Common myeloid progenitor, CD34-positive (primary cell): ENCODE measurements at regions of chr12 and their contacts with region 1.

Region 1: DNA sequence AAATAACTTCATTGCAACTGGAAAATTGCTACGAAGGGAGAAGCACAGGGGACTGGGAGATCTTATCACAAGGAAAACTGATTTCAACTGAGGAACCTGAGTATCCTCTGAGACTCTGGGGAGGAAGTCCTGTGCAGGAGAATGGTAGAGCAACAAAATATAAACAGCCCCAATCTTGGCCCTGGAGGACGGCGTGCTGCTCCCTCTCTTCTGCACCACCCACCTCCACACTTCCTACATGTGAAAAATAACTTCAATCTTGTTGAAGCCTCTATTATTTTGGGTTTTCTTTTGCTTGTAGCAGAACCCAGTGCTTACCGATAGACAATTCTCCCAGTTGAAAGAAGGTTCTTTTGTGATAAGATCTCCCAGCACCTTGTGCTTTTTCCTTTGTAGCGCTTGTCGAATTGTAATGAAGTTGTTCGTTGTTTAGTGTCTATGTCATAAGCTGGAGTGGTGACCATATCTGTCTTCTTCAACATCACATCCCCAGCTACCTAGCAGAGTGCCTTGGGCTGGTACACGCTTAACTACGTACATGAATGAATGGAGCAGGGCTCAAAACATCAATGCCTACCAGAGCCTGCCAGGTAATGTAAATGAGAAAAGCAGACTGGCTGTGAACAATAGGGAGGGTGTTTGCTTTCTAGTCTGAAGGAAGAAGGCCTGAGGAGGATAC is 2.8 kb upstream of the CD4 start:
- DNase-seq: no peak
- H3K4me3 ChIP-seq: no peak overlapping the region
- H3K27ac ChIP-seq: no peak overlapping the region
- H3K4me1 ChIP-seq: peaks cover 2 to 39% (median 31%) of the 10 kb centered on the region in 4 experiments
- H3K27me3 ChIP-seq: no peaks in the 10 kb centered on the region

Region 2: DNA sequence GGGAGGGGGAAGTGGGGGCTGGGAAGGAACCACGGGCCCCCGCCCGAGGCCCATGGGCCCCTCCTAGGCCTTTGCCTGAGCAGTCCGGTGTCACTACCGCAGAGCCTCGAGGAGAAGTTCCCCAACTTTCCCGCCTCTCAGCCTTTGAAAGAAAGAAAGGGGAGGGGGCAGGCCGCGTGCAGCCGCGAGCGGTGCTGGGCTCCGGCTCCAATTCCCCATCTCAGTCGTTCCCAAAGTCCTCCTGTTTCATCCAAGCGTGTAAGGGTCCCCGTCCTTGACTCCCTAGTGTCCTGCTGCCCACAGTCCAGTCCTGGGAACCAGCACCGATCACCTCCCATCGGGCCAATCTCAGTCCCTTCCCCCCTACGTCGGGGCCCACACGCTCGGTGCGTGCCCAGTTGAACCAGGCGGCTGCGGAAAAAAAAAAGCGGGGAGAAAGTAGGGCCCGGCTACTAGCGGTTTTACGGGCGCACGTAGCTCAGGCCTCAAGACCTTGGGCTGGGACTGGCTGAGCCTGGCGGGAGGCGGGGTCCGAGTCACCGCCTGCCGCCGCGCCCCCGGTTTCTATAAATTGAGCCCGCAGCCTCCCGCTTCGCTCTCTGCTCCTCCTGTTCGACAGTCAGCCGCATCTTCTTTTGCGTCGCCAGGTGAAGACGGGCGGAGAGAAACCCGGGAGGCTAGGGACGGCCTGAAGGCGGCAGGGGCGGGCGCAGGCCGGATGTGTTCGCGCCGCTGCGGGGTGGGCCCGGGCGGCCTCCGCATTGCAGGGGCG is 252.4 kb before region 1 on chr12 and contains the start of gene GAPDH:
- CTCF ChIA-PET with region 1: no interaction called
- POLR2A ChIA-PET with region 1: no interaction called
- DNase-seq: peak; percentile 93 to 97 (median 95)
- H3K4me3 ChIP-seq: peak within 1 kb of the TSS; percentile 83 to 96 (median 89)
- H3K27ac ChIP-seq: peak within 1 kb of the TSS; percentile 89 to 94
- H3K4me1 ChIP-seq: peaks cover 5 to 54% (median 52%) of the 10 kb centered on the region in 4 experiments
- H3K27me3 ChIP-seq: no peaks in the 10 kb centered on the region

Region 3: GRCh38 chr12:6697584-6698351 is 88.8 kb before region 1 on chr12:
- CTCF ChIA-PET with region 1: no interaction called
- POLR2A ChIA-PET with region 1: no interaction called
- DNase-seq: peak in 2 of 3 donors; percentile 28 to 36
- H3K4me3 ChIP-seq: no peak overlapping the region
- H3K27ac ChIP-seq: no peak overlapping the region
- H3K4me1 ChIP-seq: peaks cover 0 to 14% (median 8%) of the 10 kb centered on the region in 4 experiments
- H3K27me3 ChIP-seq: peaks cover 2 to 55% (median 27%) of the 10 kb centered on the region in 5 experiments

Region 4: GRCh38 chr12:6772331-6772695 is 14.2 kb before region 1 on chr12 and contains the start of gene LAG3:
- CTCF ChIA-PET with region 1: interaction called, 10 read pairs
- POLR2A ChIA-PET with region 1: no interaction called
- DNase-seq: peak in 2 of 3 donors; percentile 52 to 56
- H3K4me3 ChIP-seq: peak within 1 kb of the TSS in 5 of 7 experiments; percentile 29 to 81 (median 59)
- H3K27ac ChIP-seq: no peak within 1 kb of the TSS
- H3K4me1 ChIP-seq: peaks cover 0 to 76% (median 49%) of the 10 kb centered on the region in 4 experiments
- H3K27me3 ChIP-seq: peaks cover 0 to 16% (median 0%) of the 10 kb centered on the region in 5 experiments

Region 5: GRCh38 chr12:6851921-6852650 is 65.5 kb after region 1 on chr12 and contains the start of gene USP5:
- CTCF ChIA-PET with region 1: no interaction called
- POLR2A ChIA-PET with region 1: no interaction called
- DNase-seq: peak; percentile 100
- H3K4me3 ChIP-seq: peak within 1 kb of the TSS; percentile 82 to 99 (median 90)
- H3K27ac ChIP-seq: peak within 1 kb of the TSS; percentile 80 to 89
- H3K4me1 ChIP-seq: peaks cover 5 to 41% (median 32%) of the 10 kb centered on the region in 4 experiments
- H3K27me3 ChIP-seq: no peaks in the 10 kb centered on the region